Activated T-helper 1 cell treated with anti-CD3 and anti-CD28 coated beads, Interleukin-12 subunit alpha, Interleukin-12 subunit beta, Interleukin-2, Interleukin-4 antibody, amounts not matched to agents 30 ng/mL and 10 ng/mL and 1 ng/mL, durations not matched to agents 14 hours and 24 hours and 36 hours (primary cell): ENCODE measurements at regions of chr10 and their contacts with region 1.

Region 1: GRCh38 chr10:103481974-103482531 is 3.0 kb upstream of the CALHM3 start:
- DNase-seq: peak; percentile 41
- H3K4me3 Mint-ChIP-seq: no peak overlapping the region
- H3K27ac Mint-ChIP-seq: no peak overlapping the region
- H3K4me1 Mint-ChIP-seq: peaks cover 19% of the 10 kb centered on the region
- H3K27me3 Mint-ChIP-seq: peaks cover 6% of the 10 kb centered on the region

Region 2: DNA sequence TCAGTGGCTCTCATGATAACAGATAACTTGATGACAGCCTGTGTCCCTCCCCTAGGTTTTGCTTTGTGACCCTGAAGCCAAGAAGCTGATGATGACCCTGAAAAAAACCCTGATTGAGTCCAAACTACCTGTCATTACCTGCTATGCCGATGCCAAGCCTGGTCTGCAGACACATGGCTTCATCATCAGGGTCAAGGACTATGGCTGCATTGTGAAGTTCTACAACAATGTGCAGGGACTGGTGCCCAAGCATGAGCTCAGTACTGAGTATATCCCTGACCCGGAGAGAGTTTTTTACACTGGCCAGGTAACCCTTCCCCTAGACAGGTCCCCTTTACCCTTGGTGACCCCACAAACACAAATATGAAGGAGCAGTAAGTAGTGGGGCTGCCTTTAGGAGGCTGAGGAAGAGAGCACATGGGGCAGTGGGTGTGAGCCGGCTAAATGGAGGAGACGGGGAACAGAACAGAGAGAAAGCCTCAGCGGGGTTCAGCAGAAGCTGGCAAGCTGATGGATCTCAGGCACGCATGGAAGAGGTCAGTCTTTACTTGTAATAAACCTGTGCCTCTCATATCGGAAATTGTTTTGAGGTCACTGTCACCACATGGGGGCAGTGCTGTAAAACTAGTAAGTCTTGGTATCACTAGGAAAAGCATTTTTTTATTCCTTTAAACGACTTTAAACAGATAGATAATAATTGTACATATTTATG is 65.5 kb before region 1 on chr10:
- intact Hi-C with region 1: loop called (anchors 1 kb)
- DNase-seq: peak; percentile 39
- H3K4me3 Mint-ChIP-seq: no peak overlapping the region
- H3K27ac Mint-ChIP-seq: no peak overlapping the region
- H3K4me1 Mint-ChIP-seq: peaks cover 10% of the 10 kb centered on the region
- H3K27me3 Mint-ChIP-seq: no peaks in the 10 kb centered on the region

Region 3: GRCh38 chr10:103451831-103452505 is 30.1 kb before region 1 on chr10 and contains the start of gene CALHM2:
- intact Hi-C with region 1: loop called (anchors 1 kb)
- DNase-seq: peak; percentile 54
- H3K4me3 Mint-ChIP-seq: peak within 1 kb of the TSS; percentile 90
- H3K27ac Mint-ChIP-seq: peak within 1 kb of the TSS; percentile 88
- H3K4me1 Mint-ChIP-seq: peaks cover 48% of the 10 kb centered on the region
- H3K27me3 Mint-ChIP-seq: no peaks in the 10 kb centered on the region
- total RNA-seq, gene CALHM2: 18.6 and 19.1 TPM in 2 replicates

Region 4: GRCh38 chr10:103470761-103471653 is 11.0 kb before region 1 on chr10:
- intact Hi-C with region 1: loop called (anchors 1 kb)
- DNase-seq: peak; percentile 69
- H3K4me3 Mint-ChIP-seq: peak overlapping the region; percentile 27
- H3K27ac Mint-ChIP-seq: peak overlapping the region; percentile 89
- H3K4me1 Mint-ChIP-seq: peaks cover 71% of the 10 kb centered on the region
- H3K27me3 Mint-ChIP-seq: no peaks in the 10 kb centered on the region